ENCODE measurements at regions of chr7 and their contacts with region 1.

Region 1: GRCh38 chr7:100221231-100221718 is 1.5 kb downstream of the PVRIG start:
- DNase-seq: no peak
- ATAC-seq: no peak
- H3K4me3 ChIP-seq: no peak overlapping the region
- H3K27ac ChIP-seq: no peak overlapping the region
- H3K4me1 ChIP-seq: peaks cover under 1% of the 10 kb centered on the region
- H3K27me3 ChIP-seq: no peaks in the 10 kb centered on the region
- CTCF ChIP-seq: no peak

Region 2: GRCh38 chr7:99579956-99580777 is 641.1 kb before region 1 on chr7:
- intact Hi-C with region 1: loop called in 1 of 2 experiments (anchors 5 kb)
- DNase-seq: peak; percentile 38 to 63
- ATAC-seq: peak; percentile 43 to 65 (median 60)
- H3K4me3 ChIP-seq: peak overlapping the region; percentile 72
- H3K27ac ChIP-seq: no peak overlapping the region
- H3K4me1 ChIP-seq: peaks cover 14% of the 10 kb centered on the region
- H3K27me3 ChIP-seq: peaks cover 0 to 12% (median 5%) of the 10 kb centered on the region in 3 donors
- CTCF ChIP-seq: peak; percentile 35

Region 3: GRCh38 chr7:99767662-99768061 is 453.6 kb before region 1 on chr7:
- intact Hi-C with region 1: no loop called
- DNase-seq: no peak
- ATAC-seq: no peak
- H3K4me3 ChIP-seq: no peak overlapping the region
- H3K27ac ChIP-seq: no peak overlapping the region
- H3K4me1 ChIP-seq: peaks cover 7% of the 10 kb centered on the region
- H3K27me3 ChIP-seq: no peaks in the 10 kb centered on the region
- CTCF ChIP-seq: no peak

Region 4: DNA sequence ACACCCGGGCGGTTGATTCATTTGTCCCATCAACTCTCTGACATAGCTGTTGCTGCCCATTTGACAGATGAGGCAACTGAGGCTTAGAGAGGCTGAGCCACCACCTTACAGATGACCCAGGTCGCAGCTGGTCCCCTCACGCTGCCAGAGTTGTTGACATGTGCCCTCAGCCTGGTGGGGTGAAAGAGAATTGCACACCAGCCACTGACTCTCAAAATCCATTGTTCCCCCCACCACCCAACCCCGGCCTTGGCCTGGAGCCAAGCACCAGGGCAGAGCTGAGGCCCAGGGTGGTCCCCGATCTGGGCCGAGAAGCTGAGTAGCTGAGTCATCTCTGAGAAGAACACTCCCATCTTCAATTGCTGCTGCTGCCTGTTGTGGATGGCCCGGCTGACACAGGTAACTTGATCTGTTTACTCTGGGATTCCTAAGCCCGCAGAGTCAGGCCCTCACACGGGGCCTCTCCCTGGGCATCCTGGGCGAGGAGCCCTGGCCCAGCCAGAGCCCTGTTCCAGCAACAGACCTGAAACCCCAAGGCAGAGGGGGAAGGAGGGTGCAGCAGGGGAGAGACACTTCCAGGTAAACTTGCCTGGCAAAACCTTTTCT is 26.0 kb after region 1 on chr7:
- intact Hi-C with region 1: loop called in 1 of 2 experiments (anchors 1 kb)
- DNase-seq: peak; percentile 60 to 88
- ATAC-seq: peak; percentile 70 to 75 (median 72)
- H3K4me3 ChIP-seq: peak overlapping the region; percentile 2
- H3K27ac ChIP-seq: peak overlapping the region; percentile 96
- H3K4me1 ChIP-seq: peaks cover 50% of the 10 kb centered on the region
- H3K27me3 ChIP-seq: no peaks in the 10 kb centered on the region
- CTCF ChIP-seq: peak; percentile 20

Measured in psoas muscle (tissue), 8 donors.